ENCODE measurements at regions of chr10 and their contacts with region 1.

Region 1: DNA sequence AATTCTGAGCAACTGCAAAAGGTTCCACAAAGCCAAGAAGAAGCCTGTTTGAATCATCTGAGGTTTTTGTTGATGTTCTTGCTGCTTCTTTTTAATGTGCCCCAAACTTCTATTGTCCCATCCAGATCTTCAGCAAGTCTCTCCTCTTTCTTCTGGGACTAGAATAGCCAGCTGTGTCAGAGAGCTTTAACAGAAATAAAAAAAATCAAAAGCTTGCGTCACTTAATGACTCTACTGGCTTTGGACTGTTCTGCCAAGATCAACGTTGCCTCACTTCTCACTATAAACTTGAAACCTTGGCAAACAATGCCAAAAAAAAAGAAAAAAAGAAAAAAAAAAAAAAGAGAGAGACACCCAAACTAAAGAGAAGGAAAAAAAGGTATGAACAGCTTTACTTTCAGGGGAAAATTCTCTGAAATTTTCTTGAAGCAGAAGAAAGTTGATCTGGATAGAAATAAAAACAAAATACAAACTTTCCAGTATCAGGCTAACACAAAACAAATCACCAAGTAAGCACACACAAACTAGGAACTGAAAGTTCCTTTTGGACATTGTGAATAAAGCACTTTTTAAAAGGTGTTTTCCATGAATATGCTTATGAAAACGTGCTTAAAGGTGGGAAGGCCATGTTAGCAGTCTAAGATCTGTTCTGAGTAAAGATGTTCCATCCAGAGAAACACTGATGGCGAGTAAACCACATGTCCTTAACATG is 14.8 kb downstream of the USP54 start:
- DNase-seq: peak; percentile 79
- H3K4me3 ChIP-seq: peak overlapping the region; percentile 33 to 54 (median 39)
- H3K27ac ChIP-seq: peak overlapping the region; percentile 80 to 90 (median 86)
- H3K4me1 ChIP-seq: peaks cover 0 to 59% (median 40%) of the 10 kb centered on the region in 4 donors
- H3K27me3 ChIP-seq: no peaks in the 10 kb centered on the region
- CTCF ChIP-seq: no peak
- EP300 ChIP-seq: peak; percentile 75 to 96 (median 84)
- POLR2A ChIP-seq: peak; percentile 87 to 93

Region 2: DNA sequence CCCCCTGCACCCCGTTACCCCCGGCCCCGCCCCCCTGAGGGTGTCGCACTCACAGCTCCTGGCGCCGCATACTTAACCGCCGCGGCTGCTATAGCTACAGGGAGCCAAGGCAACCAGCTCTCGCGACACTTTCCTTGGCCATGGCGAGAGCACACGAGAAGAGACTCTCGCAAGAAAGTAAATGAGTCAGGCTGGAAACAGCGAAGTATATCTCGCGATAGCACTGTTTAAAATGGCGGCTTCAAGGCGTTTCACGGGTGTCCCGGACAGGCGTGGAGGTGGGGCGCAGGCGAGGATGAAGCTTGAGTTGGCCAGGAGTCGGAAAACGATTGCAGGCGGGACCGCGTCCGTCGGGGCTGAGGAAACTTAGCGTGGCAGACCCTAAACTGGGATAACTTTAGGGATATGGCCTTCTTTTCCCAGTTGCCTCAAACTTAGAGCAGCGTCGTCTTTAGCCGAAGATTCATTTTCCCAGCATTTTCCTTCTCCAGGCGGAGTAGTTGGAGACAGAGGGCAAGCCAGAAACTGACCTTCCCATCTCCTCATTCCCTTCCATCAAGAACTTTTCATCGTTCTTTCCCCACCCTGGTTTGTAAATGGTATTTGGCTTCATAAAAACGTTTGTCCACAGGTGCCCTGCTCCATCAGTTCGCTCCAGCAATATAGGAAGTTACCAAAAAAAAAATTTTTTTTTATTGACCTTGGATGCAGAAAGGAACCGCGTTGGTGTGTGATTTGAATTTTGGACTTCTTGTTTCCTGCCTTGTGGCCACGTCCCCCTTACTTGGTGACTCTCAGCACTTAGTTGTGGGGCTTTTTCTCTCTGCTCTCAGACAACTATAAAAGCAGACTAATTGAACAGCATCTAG is 49.8 kb after region 1 on chr10:
- intact Hi-C with region 1: loop called (anchors 2 kb)
- DNase-seq: peak; percentile 98
- H3K4me3 ChIP-seq: peak overlapping the region; percentile 82 to 91 (median 85)
- H3K27ac ChIP-seq: peak overlapping the region; percentile 77 to 88 (median 80)
- H3K4me1 ChIP-seq: peaks cover 0 to 15% (median 7%) of the 10 kb centered on the region in 4 donors
- H3K27me3 ChIP-seq: no peaks in the 10 kb centered on the region
- CTCF ChIP-seq: no peak
- EP300 ChIP-seq: no peak
- POLR2A ChIP-seq: no peak